AG04449 (cell line): ENCODE measurements at regions of chr15 and their contacts with region 1.

Region 1: GRCh38 chr15:69058830-69059556 is 44.5 kb downstream of the NOX5 start:
- DNase-seq: no peak
- H3K4me3 ChIP-seq: no peak overlapping the region
- CTCF ChIP-seq: peak; percentile 81

Region 2: GRCh38 chr15:69014454-69014853 is 44.5 kb before region 1 on chr15 and contains the start of gene NOX5:
- CTCF ChIA-PET with region 1: no interaction called
- POLR2A ChIA-PET with region 1: no interaction called
- DNase-seq: peak; percentile 38
- H3K4me3 ChIP-seq: no peak within 1 kb of the TSS
- CTCF ChIP-seq: no peak

Region 3: DNA sequence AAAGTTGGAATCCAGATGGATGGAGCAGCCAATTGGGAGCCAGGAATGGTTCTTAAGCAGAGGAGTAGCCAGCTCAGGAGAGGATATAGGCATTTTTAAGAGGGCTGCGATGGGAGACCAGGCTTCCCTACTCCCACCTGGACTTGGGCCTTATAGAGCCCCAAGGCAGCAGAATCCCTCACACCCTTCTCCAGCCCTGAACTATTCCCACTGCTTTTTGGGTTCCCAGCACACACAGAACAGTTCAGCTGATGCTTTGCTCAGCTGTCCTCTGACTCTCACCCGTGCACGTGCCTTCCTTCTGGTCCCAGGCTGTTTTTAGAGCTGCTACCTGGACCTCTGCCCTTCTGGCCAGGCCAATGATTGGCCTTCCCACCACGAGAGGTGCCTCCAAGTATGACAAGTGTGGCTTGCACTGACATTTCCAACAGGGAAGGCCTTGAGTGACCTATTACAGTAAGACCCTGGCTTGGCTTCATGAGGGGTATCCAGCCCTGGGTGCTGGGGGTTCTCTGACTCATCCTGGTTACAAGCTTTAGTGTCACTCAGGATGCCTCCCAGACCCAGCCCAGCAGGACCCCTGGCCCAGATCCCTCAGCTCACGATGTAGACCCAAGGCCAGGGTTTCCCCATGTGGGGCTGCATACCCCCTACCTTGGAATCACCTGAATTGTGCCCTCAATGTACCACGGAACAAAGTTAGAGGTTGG is 19.3 kb before region 1 on chr15:
- CTCF ChIA-PET with region 1: interaction called, 44 read pairs
- POLR2A ChIA-PET with region 1: no interaction called
- DNase-seq: no peak
- H3K4me3 ChIP-seq: no peak overlapping the region
- CTCF ChIP-seq: no peak

Region 4: DNA sequence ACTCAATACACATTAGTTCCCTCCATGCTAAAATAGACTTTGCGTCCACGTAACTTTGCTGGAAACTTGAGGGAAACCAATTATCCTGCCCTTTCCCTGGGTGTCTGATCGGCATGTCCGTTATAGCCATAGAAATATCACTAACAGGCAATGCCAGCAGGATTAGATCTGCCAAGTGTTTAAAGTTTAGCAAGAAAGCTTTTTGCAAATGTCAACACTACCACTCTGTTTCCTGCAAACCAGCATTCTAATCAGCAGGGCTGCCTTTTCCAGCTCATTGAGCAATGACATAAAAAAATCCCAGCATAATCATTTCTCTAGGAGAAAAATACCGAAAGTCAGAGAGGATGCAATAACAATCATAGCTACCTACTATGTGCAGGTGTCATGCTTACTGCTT is 16.4 kb after region 1 on chr15:
- CTCF ChIA-PET with region 1: interaction called, 11 read pairs
- POLR2A ChIA-PET with region 1: no interaction called
- DNase-seq: no peak
- H3K4me3 ChIP-seq: no peak overlapping the region
- CTCF ChIP-seq: no peak

Region 5: DNA sequence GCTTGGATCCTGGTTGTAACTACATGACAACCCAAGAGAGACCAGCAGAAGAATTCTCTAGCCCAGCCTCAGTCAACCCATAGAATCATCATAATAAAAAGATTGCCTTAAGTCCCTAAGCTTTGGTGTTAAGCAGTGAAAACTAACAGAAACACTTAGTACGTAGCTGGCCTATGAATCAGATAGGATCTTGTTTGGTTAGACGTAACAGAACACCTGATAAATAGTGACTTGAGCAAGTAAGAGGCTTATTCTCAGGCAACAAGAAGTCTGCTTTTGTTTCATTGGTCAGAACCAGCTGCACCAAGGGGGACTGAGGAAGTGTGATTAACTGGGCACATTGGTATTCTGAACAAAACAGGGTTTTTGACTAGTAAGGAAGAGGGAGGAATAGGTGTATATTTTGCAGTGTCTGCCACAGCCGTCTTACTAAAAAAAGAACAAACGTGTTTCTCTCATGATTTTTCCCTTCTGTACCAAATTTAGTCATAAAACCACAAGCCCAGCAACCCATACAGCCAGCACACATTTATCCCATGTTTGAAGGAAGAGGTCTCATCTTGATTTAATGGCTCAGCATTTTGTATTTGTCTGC is 48.1 kb after region 1 on chr15:
- CTCF ChIA-PET with region 1: no interaction called
- POLR2A ChIA-PET with region 1: no interaction called
- DNase-seq: no peak
- H3K4me3 ChIP-seq: no peak overlapping the region
- CTCF ChIP-seq: no peak

Region 6: GRCh38 chr15:69244798-69245197 is 185.8 kb after region 1 on chr15:
- CTCF ChIA-PET with region 1: interaction called, 18 read pairs
- POLR2A ChIA-PET with region 1: no interaction called
- DNase-seq: no peak
- H3K4me3 ChIP-seq: no peak overlapping the region
- CTCF ChIP-seq: no peak

Region 7: DNA sequence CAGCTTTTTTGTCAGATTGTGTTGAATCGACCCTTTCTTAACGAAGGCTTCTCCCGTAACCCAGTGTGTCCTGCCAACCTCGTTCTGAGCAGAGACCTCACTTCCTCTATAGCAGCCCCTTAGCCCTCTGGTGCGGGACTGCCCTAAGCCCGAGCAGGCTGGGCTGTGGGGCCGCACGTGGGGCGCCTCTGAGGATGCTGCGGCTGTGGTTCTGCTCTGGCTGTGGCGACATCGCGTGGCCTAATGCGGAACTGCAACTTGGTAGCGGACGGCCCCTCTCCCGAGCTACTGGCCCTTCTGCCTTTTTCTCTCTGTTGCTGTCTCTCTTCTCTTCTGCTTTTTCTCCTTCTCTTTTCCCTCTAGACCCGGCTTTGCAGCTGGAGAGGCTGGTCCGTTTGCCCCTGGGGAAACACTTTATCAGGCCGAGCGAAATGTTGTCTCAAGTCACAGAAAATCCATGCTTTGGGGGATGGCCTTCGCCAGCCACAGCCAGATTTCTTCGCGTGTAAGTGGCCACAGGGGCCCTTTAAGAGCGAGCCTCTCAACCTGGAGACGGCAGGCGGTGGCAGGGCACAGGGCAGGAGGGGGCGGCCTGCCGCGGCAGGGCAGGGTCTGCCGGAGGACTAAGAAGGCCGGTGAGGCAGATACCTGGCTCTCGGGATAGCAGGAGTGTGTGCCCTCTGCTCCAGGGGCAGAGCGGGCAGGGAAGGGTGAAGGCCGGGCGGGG is 335.7 kb after region 1 on chr15:
- CTCF ChIA-PET with region 1: interaction called, 93 read pairs
- POLR2A ChIA-PET with region 1: no interaction called
- DNase-seq: no peak
- H3K4me3 ChIP-seq: no peak overlapping the region
- CTCF ChIP-seq: peak; percentile 99